ENCODE measurements at regions of chr22 and their contacts with region 1.

Region 1: GRCh38 chr22:20020533-20021195 is at the start of gene TANGO2:
- DNase-seq: peak; percentile 63 to 92
- H3K4me3 ChIP-seq: peak within 1 kb of the TSS; percentile 88
- H3K27ac ChIP-seq: 0 out of 2 replicates have a peak within 1 kb of the TSS, but pooled peaks have one; percentile 19
- H3K4me1 ChIP-seq: peaks cover 9% of the 10 kb centered on the region; the same call in 1 of the 2 replicates
- H3K27me3 ChIP-seq: no peaks in the 10 kb centered on the region
- CTCF ChIP-seq: no peak
- total RNA-seq, gene TANGO2: 22.4 and 25.0 TPM in 2 replicates

Region 2: DNA sequence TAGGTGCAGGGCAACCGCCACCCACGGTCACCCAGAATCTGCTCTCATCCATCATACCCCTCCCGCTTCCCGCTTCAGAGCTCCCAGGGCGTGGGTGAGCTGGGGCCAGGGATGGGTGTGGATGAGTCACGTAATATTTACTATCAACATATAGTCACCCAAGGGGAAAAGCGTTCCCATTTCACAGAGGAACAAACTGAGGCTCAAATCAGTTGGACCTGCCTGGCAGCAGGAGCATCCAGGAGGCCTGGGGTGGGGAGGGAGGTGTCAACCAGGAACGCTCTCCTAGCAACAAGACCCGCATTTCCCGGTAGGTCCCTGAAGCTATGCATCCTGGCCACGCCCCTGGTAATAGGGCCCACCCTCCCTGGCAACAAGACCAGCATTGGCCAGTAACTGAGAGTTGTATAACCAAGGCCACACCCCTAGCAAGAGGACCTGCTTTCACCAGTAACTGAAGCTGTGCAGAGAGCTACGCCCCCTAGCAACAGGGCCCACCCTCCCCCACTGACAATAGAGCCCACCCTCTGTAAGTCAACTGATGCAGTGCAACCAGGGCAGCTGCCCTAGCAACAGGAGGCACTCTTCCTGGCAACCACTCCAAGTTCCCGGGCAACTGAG is 46.3 kb before region 1 on chr22:
- CTCF ChIA-PET with region 1: no interaction called
- POLR2A ChIA-PET with region 1: no interaction called
- intact Hi-C with region 1: loop called (anchors 2 kb)
- DNase-seq: peak; percentile 44 to 57
- H3K4me3 ChIP-seq: no peak overlapping the region
- H3K27ac ChIP-seq: 0 out of 2 replicates have a peak overlapping the region, but pooled peaks have one; percentile 41
- H3K4me1 ChIP-seq: peaks cover 17% of the 10 kb centered on the region
- H3K27me3 ChIP-seq: no peaks in the 10 kb centered on the region
- CTCF ChIP-seq: no peak

Region 3: GRCh38 chr22:19986410-19987341 is 34.0 kb before region 1 on chr22:
- CTCF ChIA-PET with region 1: no interaction called
- POLR2A ChIA-PET with region 1: interaction called, 4 read pairs
- intact Hi-C with region 1: loop called (anchors 5 kb)
- DNase-seq: peak; percentile 41 to 73
- H3K4me3 ChIP-seq: peak overlapping the region; percentile 61
- H3K27ac ChIP-seq: no peak overlapping the region
- H3K4me1 ChIP-seq: peaks cover 20% of the 10 kb centered on the region
- H3K27me3 ChIP-seq: no peaks in the 10 kb centered on the region
- CTCF ChIP-seq: no peak

Measured in PC-9 (cell line).